Endothelial cell of umbilical vein (primary cell): ENCODE measurements at regions of chr11 and their contacts with region 1.

Region 1: DNA sequence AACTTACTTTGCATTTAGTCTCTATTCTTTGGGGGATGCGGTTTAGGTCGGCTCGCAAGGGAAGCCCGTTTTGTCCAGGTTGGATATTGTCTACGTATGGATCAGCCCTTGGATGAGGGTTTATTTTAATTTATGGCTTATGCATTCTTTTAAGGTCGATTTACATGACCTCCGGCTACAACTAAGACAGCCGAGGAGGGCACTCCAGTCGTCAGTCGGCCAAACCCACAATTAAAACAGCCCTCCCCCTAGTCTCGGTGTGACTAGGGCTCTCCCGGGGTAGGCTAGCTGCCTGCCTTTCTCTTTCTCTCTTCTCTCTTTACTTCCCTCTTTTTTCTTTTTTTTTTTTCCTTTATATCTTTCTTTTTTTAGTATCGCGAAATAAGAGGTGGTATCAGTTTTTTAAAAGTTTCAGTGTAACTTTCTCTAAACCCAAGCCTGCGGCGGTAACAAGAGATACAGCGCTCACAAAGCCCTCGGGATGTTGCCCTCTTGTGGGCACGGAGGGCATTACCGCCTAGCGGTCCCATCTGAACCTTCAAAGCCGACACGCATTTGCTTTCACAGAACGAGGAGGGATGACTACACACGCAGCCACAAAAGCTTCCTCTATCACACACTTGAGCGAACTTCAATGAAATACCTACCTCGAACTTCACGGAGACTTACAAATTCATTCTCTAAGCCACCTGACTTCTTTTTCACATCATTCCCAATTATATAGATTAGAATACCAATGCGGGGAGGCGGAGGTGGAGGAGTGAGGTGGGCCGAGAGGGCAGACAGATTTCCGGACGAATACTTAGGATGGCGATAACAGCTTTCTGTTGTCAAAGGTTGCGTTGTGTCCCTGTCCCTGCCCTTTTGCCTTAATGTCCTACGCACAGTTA is 132.3 kb upstream of the C11orf58 start:
- DNase-seq: peak; percentile 91
- H3K4me3 ChIP-seq: peak overlapping the region; percentile 12 to 80 (median 56)
- H3K27ac ChIP-seq: no peak overlapping the region
- H3K4me1 ChIP-seq: peaks cover 29% of the 10 kb centered on the region
- H3K27me3 ChIP-seq: peaks cover 37 to 48% of the 10 kb centered on the region in 2 experiments
- CTCF ChIP-seq: peak; percentile 89 to 94
- POLR2A ChIP-seq: no peak

Region 2: GRCh38 chr11:15650105-15650938 is 955.8 kb before region 1 on chr11:
- CTCF ChIA-PET with region 1: interaction called, 14 read pairs
- POLR2A ChIA-PET with region 1: no interaction called
- dilution Hi-C with region 1: no loop called
- intact Hi-C with region 1: loop called (anchors 1 kb)
- DNase-seq: peak; percentile 90
- H3K4me3 ChIP-seq: peak overlapping the region in 2 of 3 experiments; percentile 19 to 24
- H3K27ac ChIP-seq: no peak overlapping the region
- H3K4me1 ChIP-seq: peaks cover 3% of the 10 kb centered on the region
- H3K27me3 ChIP-seq: no peaks in the 10 kb centered on the region
- CTCF ChIP-seq: peak; percentile 91 to 98
- POLR2A ChIP-seq: no peak

Region 3: GRCh38 chr11:15826826-15827225 is 779.3 kb before region 1 on chr11:
- CTCF ChIA-PET with region 1: interaction called, 5 read pairs
- POLR2A ChIA-PET with region 1: no interaction called
- dilution Hi-C with region 1: no loop called
- intact Hi-C with region 1: loop called (anchors 1 kb)
- DNase-seq: peak; percentile 49
- H3K4me3 ChIP-seq: no peak overlapping the region
- H3K27ac ChIP-seq: no peak overlapping the region
- H3K4me1 ChIP-seq: peaks cover 18% of the 10 kb centered on the region
- H3K27me3 ChIP-seq: no peaks in the 10 kb centered on the region
- CTCF ChIP-seq: peak; percentile 65 to 75
- POLR2A ChIP-seq: no peak

Region 4: DNA sequence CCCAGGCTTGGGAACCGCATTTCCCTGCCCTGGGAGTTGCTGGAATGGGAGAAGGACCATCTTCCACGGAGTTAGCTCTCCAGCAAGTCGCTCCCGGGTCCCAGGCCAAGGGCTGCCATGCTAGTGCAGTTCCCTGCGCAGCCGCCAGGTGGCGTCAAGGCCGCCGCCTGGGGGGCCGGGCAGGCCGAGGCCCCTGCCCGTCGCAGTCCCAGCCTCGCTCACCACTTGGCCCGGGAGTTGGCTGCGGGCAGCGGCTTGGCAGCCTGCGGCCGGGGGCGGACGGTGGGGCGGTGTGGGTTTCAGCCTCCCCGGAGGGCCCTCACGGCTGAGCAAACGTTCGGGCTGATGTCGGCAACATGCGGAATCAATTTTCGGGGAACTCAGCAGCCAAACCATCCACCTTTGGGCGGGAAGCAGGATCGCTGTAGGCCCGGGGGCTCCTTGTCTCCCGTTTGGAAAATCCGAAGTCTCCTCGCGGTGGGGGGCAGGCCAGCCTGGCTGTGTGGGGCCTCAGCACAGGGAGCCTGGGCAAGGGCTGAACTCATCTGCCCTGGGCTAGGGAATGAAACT is 664.9 kb before region 1 on chr11:
- CTCF ChIA-PET with region 1: interaction called, 10 read pairs
- POLR2A ChIA-PET with region 1: no interaction called
- dilution Hi-C with region 1: no loop called
- intact Hi-C with region 1: loop called (anchors 1 kb)
- DNase-seq: peak; percentile 40
- H3K4me3 ChIP-seq: no peak overlapping the region
- H3K27ac ChIP-seq: no peak overlapping the region
- H3K4me1 ChIP-seq: no peaks in the 10 kb centered on the region
- H3K27me3 ChIP-seq: no peaks in the 10 kb centered on the region
- CTCF ChIP-seq: peak; percentile 95 to 97
- POLR2A ChIP-seq: no peak

Region 5: DNA sequence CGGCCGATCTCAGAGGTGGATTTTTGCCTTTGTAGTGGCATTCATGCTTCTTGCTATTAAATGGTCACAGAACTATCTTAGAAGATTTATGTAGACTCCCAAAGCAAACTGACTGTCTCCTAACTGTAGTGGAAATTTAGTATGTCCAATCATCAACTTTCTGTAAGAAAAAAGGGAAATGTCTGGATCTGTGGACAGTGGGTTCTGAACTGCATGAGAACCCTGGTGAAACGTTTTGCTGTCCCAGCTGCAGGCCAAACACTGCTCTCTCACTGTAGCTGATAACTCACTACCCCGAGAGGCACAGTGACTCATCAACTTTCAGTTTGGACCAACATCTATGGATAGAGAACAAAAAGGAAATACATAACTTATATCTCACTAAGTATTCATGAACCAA is 636.9 kb before region 1 on chr11:
- CTCF ChIA-PET with region 1: no interaction called
- POLR2A ChIA-PET with region 1: no interaction called
- dilution Hi-C with region 1: no loop called
- intact Hi-C with region 1: loop called (anchors 1 kb)
- DNase-seq: peak; percentile 85
- H3K4me3 ChIP-seq: no peak overlapping the region
- H3K27ac ChIP-seq: peak overlapping the region; percentile 93
- H3K4me1 ChIP-seq: peaks cover 24% of the 10 kb centered on the region
- H3K27me3 ChIP-seq: no peaks in the 10 kb centered on the region
- CTCF ChIP-seq: no peak
- POLR2A ChIP-seq: no peak

Region 6: GRCh38 chr11:16047073-16047472 is 559.1 kb before region 1 on chr11:
- CTCF ChIA-PET with region 1: no interaction called
- POLR2A ChIA-PET with region 1: no interaction called
- dilution Hi-C with region 1: no loop called
- intact Hi-C with region 1: loop called (anchors 5 kb)
- DNase-seq: peak; percentile 14
- H3K4me3 ChIP-seq: no peak overlapping the region
- H3K27ac ChIP-seq: no peak overlapping the region
- H3K4me1 ChIP-seq: peaks cover 5% of the 10 kb centered on the region
- H3K27me3 ChIP-seq: no peaks in the 10 kb centered on the region
- CTCF ChIP-seq: no peak
- POLR2A ChIP-seq: no peak

Region 7: GRCh38 chr11:16191212-16191867 is 414.8 kb before region 1 on chr11:
- CTCF ChIA-PET with region 1: no interaction called
- POLR2A ChIA-PET with region 1: no interaction called
- dilution Hi-C with region 1: no loop called
- intact Hi-C with region 1: loop called (anchors 10 kb)
- DNase-seq: no peak
- H3K4me3 ChIP-seq: no peak overlapping the region
- H3K27ac ChIP-seq: no peak overlapping the region
- H3K4me1 ChIP-seq: no peaks in the 10 kb centered on the region
- H3K27me3 ChIP-seq: no peaks in the 10 kb centered on the region
- CTCF ChIP-seq: no peak
- POLR2A ChIP-seq: no peak

Region 8: GRCh38 chr11:16669799-16670415 is 63.8 kb after region 1 on chr11:
- CTCF ChIA-PET with region 1: no interaction called
- POLR2A ChIA-PET with region 1: no interaction called
- dilution Hi-C with region 1: no loop called
- intact Hi-C with region 1: no loop called
- DNase-seq: no peak
- H3K4me3 ChIP-seq: no peak overlapping the region
- H3K27ac ChIP-seq: no peak overlapping the region
- H3K4me1 ChIP-seq: no peaks in the 10 kb centered on the region
- H3K27me3 ChIP-seq: no peaks in the 10 kb centered on the region
- CTCF ChIP-seq: no peak
- POLR2A ChIP-seq: no peak

Region 9: DNA sequence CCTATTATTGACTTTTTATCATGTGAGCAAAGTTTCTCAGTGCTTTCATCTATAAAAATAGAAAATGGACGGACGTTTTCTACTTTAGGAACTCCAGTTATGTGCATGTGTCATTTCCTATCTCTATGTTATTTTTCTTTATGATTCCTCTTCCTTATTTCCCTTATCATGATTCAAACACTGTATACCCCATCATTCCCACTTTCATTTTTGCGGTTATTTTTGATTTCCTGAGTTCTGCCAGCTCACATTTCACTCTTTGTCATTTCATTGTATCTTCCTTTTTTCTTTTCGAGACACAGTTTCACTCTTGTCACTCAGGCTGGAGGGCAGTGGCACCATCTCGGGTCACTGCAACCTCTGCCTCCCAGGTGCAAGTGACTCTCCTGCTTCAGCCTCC is 153.7 kb after region 1 on chr11:
- CTCF ChIA-PET with region 1: no interaction called
- POLR2A ChIA-PET with region 1: no interaction called
- dilution Hi-C with region 1: no loop called
- intact Hi-C with region 1: no loop called
- DNase-seq: peak; percentile 75
- H3K4me3 ChIP-seq: no peak overlapping the region
- H3K27ac ChIP-seq: peak overlapping the region; percentile 89
- H3K4me1 ChIP-seq: peaks cover 14% of the 10 kb centered on the region
- H3K27me3 ChIP-seq: no peaks in the 10 kb centered on the region
- CTCF ChIP-seq: no peak
- POLR2A ChIP-seq: no peak

Region 10: DNA sequence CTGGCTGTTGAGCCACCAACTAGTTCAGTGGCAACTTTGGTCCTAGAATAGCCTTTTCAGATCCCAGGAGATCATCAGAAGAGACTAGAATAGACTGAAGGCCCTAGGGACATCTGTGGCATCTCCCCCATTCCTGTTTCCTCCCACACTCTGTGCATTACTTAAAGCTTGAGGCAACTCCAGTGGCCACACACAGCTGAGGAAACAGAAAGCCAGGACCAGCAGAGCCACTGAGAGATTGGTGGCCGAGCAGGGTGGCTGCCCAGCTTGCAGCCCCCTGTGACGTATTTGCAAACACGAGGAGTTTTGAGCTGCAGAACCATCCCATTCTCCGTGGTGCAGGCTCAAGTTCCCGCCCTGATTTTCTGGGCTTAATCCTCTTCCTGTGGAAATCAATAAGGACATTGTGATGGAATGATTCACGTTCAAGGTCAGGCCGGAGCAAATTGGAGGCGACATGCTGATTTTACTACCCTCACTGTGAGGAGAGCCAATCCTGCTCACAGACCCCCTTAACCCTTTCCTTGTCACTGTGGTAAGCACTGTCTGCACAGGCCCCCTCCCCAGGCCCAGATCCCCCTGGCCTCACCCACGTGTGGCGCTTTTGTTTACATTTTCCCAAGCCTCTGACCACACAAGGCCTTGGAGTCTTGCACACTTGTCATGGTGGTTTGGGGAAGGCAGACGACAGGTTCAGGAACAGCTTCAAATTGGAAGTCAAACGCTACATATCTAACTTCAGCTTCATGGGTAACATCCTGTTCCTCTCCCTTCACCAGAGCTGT is 1044.2 kb after region 1 on chr11:
- CTCF ChIA-PET with region 1: no interaction called
- POLR2A ChIA-PET with region 1: no interaction called
- dilution Hi-C with region 1: no loop called
- intact Hi-C with region 1: no loop called
- DNase-seq: peak; percentile 10
- H3K4me3 ChIP-seq: no peak overlapping the region
- H3K27ac ChIP-seq: no peak overlapping the region
- H3K4me1 ChIP-seq: peaks cover 15% of the 10 kb centered on the region
- H3K27me3 ChIP-seq: peaks cover 0 to 2% of the 10 kb centered on the region in 2 experiments
- CTCF ChIP-seq: no peak
- POLR2A ChIP-seq: no peak